B cell (primary cell): ENCODE measurements at regions of chr15 and their contacts with region 1.

Region 1: GRCh38 chr15:74382004-74382816 is 14.8 kb upstream of the CYP11A1 start:
- DNase-seq: peak; percentile 84
- ATAC-seq: no peak
- H3K4me3 ChIP-seq: no peak overlapping the region
- H3K4me3 Mint-ChIP-seq: no peak overlapping the region
- H3K27ac ChIP-seq: peak overlapping the region in 1 of 2 donors; percentile 97
- H3K27ac Mint-ChIP-seq: peak overlapping the region; percentile 98
- H3K4me1 ChIP-seq: peaks cover 53 to 58% of the 10 kb centered on the region in 2 donors
- H3K4me1 Mint-ChIP-seq: peaks cover 59% of the 10 kb centered on the region
- H3K27me3 ChIP-seq: no peaks in the 10 kb centered on the region
- H3K27me3 Mint-ChIP-seq: no peaks in the 10 kb centered on the region
- CTCF ChIP-seq: peak; percentile 95

Region 2: GRCh38 chr15:74222240-74223119 is 159.7 kb before region 1 on chr15:
- CTCF ChIA-PET with region 1: no interaction called
- POLR2A ChIA-PET with region 1: no interaction called
- intact Hi-C with region 1: no loop called
- DNase-seq: no peak
- ATAC-seq: no peak
- H3K4me3 ChIP-seq: no peak overlapping the region
- H3K4me3 Mint-ChIP-seq: no peak overlapping the region
- H3K27ac ChIP-seq: no peak overlapping the region
- H3K27ac Mint-ChIP-seq: no peak overlapping the region
- H3K4me1 ChIP-seq: no peaks in the 10 kb centered on the region
- H3K4me1 Mint-ChIP-seq: no peaks in the 10 kb centered on the region
- H3K27me3 ChIP-seq: peaks cover 0 to 13% (median 1%) of the 10 kb centered on the region in 4 experiments
- H3K27me3 Mint-ChIP-seq: peaks cover 48% of the 10 kb centered on the region
- CTCF ChIP-seq: no peak

Region 3: GRCh38 chr15:74407055-74407691 is 25.0 kb after region 1 on chr15:
- CTCF ChIA-PET with region 1: interaction called, 153 read pairs
- POLR2A ChIA-PET with region 1: interaction called, 64 read pairs
- intact Hi-C with region 1: loop called (anchors 1 kb)
- DNase-seq: no peak
- ATAC-seq: no peak
- H3K4me3 ChIP-seq: no peak overlapping the region
- H3K4me3 Mint-ChIP-seq: no peak overlapping the region
- H3K27ac ChIP-seq: peak overlapping the region in 1 of 2 donors; percentile 11
- H3K27ac Mint-ChIP-seq: peak overlapping the region; percentile 59
- H3K4me1 ChIP-seq: peaks cover 38 to 59% of the 10 kb centered on the region in 2 donors
- H3K4me1 Mint-ChIP-seq: peaks cover 61% of the 10 kb centered on the region
- H3K27me3 ChIP-seq: no peaks in the 10 kb centered on the region
- H3K27me3 Mint-ChIP-seq: no peaks in the 10 kb centered on the region
- CTCF ChIP-seq: no peak

Region 4: GRCh38 chr15:74433592-74434262 is 51.5 kb after region 1 on chr15 and contains the start of gene SEMA7A:
- CTCF ChIA-PET with region 1: interaction called, 855 read pairs
- POLR2A ChIA-PET with region 1: interaction called, 35 read pairs
- intact Hi-C with region 1: loop called (anchors 1 kb)
- DNase-seq: peak; percentile 92
- ATAC-seq: peak; percentile 80
- H3K4me3 ChIP-seq: peak within 1 kb of the TSS; percentile 60 to 89 (median 82)
- H3K4me3 Mint-ChIP-seq: peak within 1 kb of the TSS; percentile 96
- H3K27ac ChIP-seq: peak within 1 kb of the TSS; percentile 75 to 88
- H3K27ac Mint-ChIP-seq: peak within 1 kb of the TSS; percentile 92
- H3K4me1 ChIP-seq: peaks cover 57 to 69% of the 10 kb centered on the region in 2 donors
- H3K4me1 Mint-ChIP-seq: peaks cover 74% of the 10 kb centered on the region
- H3K27me3 ChIP-seq: no peaks in the 10 kb centered on the region
- H3K27me3 Mint-ChIP-seq: no peaks in the 10 kb centered on the region
- CTCF ChIP-seq: no peak
- total RNA-seq, gene SEMA7A: 39.0 and 44.2 TPM in 2 replicates

Region 5: DNA sequence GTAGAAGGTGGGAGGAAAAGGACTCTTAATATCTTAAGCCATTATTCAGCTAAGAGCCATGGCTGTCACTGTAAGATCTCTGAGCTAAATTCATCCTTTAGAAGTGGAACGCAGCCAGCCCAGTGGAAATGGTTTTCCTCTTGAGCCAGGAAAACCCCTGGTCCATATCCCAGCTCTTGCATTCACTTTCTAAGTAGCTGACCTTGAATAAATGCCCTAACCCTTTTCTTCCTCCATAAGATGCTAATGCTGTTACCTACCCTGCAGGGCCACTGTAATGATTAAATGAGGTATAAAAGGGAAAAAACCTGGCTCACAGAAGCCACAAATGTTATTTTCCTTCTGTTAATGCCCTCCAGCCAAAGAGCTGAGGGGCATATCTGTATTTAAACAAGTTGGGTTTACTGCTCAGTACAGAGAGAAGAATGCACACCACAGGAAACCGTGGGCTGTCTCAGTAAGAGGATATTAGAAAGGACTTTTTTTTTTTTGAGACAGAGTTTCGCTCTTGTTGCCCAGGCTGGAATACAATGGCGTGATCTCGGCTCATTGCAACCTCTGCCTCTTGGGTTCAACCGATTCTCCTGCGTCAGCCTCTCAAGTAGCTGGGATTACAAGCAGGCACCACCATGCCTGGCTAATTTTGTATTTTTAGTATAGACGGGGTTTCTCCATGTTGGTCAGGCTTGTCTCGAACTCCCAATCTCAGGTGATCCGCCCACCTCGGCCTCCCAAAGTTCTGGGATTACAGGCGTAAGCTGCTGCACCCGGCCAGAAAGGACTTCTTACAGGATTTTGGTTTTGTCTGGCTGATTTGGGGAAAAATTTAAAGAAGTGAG is 71.9 kb after region 1 on chr15:
- CTCF ChIA-PET with region 1: interaction called, 855 read pairs
- POLR2A ChIA-PET with region 1: no interaction called
- intact Hi-C with region 1: no loop called
- DNase-seq: no peak
- ATAC-seq: no peak
- H3K4me3 ChIP-seq: no peak overlapping the region
- H3K4me3 Mint-ChIP-seq: no peak overlapping the region
- H3K27ac ChIP-seq: no peak overlapping the region
- H3K27ac Mint-ChIP-seq: no peak overlapping the region
- H3K4me1 ChIP-seq: no peaks in the 10 kb centered on the region
- H3K4me1 Mint-ChIP-seq: peaks cover 2% of the 10 kb centered on the region
- H3K27me3 ChIP-seq: no peaks in the 10 kb centered on the region
- H3K27me3 Mint-ChIP-seq: no peaks in the 10 kb centered on the region
- CTCF ChIP-seq: no peak

Region 6: DNA sequence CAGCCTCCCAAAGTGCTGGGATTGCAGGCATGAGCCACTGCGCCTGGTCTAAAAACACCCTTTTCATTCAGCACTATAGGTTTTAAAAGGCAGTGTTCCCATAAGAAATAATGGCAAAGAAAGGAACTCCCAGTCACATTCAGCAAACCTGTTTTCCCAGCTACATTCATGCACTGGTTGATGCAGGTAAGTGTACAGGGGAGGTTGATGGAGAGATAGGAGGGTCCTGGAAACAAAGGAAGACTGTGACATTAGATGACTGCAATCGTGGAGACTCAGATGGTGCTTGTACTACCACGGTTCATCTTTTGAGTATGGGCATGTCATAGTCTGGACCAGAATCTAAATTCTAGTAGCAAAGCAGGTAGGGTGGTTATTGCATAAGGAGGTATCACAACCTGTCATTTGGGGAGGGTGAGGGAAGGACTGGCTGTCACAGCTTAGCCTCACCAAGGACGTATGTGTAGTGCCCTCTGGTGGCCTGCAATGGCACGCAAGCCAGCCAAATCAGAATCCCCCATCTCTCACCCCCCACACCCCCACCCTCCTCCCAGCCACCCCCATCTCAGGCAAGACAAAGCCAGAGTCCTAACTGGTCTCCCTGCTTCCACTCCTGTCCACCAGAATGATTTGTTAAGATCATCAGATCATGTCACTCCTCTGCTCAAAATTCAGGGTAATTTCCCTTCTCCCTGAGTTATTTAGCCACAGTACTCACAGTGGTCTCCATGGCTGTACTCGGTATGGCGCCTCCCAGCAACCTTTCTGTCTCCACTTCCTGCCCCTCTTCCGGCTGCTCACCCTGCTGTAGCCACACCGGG is 107.5 kb after region 1 on chr15:
- CTCF ChIA-PET with region 1: interaction called, 44 read pairs
- POLR2A ChIA-PET with region 1: interaction called, 15 read pairs
- intact Hi-C with region 1: no loop called
- DNase-seq: peak; percentile 82
- ATAC-seq: peak; percentile 96
- H3K4me3 ChIP-seq: no peak overlapping the region
- H3K4me3 Mint-ChIP-seq: peak overlapping the region; percentile 13
- H3K27ac ChIP-seq: no peak overlapping the region
- H3K27ac Mint-ChIP-seq: no peak overlapping the region
- H3K4me1 ChIP-seq: peaks cover 10% of the 10 kb centered on the region in 2 donors
- H3K4me1 Mint-ChIP-seq: peaks cover 11% of the 10 kb centered on the region
- H3K27me3 ChIP-seq: no peaks in the 10 kb centered on the region
- H3K27me3 Mint-ChIP-seq: no peaks in the 10 kb centered on the region
- CTCF ChIP-seq: peak; percentile 78